ENCODE measurements at regions of chr2 and their contacts with region 1.

Region 1: DNA sequence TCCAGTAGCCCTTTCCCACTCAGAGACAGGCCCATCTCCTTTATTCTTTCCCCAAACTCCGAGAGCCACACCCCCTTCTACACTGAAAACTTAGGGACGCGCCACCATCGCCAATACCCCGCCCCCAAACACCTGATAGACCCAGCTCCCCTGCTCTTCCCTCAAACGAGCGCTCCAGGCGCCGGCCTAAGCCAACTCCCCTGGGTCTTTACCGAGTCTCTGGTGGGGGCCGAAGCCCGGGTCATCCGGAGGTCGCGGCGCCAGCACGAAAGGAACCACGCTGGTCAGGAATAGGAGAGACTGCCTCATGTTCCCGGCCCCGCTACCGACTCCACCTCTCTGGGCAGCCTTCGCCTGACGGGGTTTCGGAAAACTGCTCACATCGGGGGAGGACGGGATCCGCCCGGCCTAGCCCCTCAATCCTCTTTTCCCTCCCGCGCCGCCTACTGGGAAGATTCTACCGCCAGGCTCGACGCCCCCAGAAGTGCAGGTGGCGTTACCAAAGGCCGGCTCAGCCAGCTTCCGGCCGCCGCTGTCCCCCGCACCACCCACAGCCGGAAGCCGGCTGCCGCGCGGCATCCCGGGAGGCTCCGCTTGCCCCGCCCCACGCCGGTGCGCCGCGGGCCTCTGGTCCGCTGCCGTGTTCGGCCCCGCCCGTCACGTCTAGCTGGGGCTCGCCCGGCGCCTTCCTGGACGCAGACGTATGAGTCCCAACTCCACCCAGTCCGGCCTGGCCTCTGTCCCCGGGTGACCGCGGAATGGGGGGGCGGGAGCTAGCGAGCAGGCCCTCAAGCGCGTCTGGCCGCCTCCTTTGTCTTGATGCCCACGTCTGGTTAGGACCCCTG is at the start of gene ADAM17:
- DNase-seq: peak; percentile 96 to 97
- ATAC-seq: peak; percentile 83 to 85
- H3K4me3 ChIP-seq: peak within 1 kb of the TSS; percentile 91 to 98 (median 95)
- H3K27ac ChIP-seq: peak within 1 kb of the TSS; percentile 96 to 99 (median 98)
- H3K4me1 ChIP-seq: peaks cover 48 to 53% of the 10 kb centered on the region in 2 donors
- H3K27me3 ChIP-seq: no peaks in the 10 kb centered on the region
- CTCF ChIP-seq: peak; percentile 49 to 80 (median 68)
- POLR2A ChIP-seq: peak; percentile 86 to 95
- total RNA-seq, gene ADAM17: 13.5 to 27.1 (median 22.0) TPM

Region 2: GRCh38 chr2:9333591-9334171 is 221.8 kb before region 1 on chr2:
- in situ Hi-C with region 1: no loop called
- intact Hi-C with region 1: no loop called
- DNase-seq: peak; percentile 24 to 45
- ATAC-seq: peak; percentile 86 to 91
- H3K4me3 ChIP-seq: no peak overlapping the region
- H3K27ac ChIP-seq: peak overlapping the region in 2 of 4 donors; percentile 11 to 24
- H3K4me1 ChIP-seq: peaks cover 7 to 16% of the 10 kb centered on the region in 2 donors
- H3K27me3 ChIP-seq: no peaks in the 10 kb centered on the region
- CTCF ChIP-seq: peak; percentile 36 to 66 (median 45)
- POLR2A ChIP-seq: no peak

Region 3: GRCh38 chr2:9423100-9423921 is 132.2 kb before region 1 on chr2 and contains the starts of genes CPSF3 and ITGB1BP1:
- in situ Hi-C with region 1: no loop called
- intact Hi-C with region 1: loop called (anchors 2 kb)
- DNase-seq: peak; percentile 94 to 96
- ATAC-seq: peak; percentile 93 to 96
- H3K4me3 ChIP-seq: peak within 1 kb of the TSS; percentile 84 to 99 (median 98)
- H3K27ac ChIP-seq: peak within 1 kb of the TSS; percentile 82 to 96 (median 91)
- H3K4me1 ChIP-seq: peaks cover 27 to 29% of the 10 kb centered on the region in 2 donors
- H3K27me3 ChIP-seq: no peaks in the 10 kb centered on the region
- CTCF ChIP-seq: peak in 3 of 5 experiments; percentile 11 to 35 (median 27)
- POLR2A ChIP-seq: peak; percentile 55 to 60
- total RNA-seq, gene CPSF3: 20.9 to 51.8 (median 24.1) TPM
- total RNA-seq, gene ITGB1BP1: 21.4 to 28.0 (median 26.4) TPM

Region 4: GRCh38 chr2:9474361-9474967 is 81.1 kb before region 1 on chr2 and contains the start of gene IAH1:
- in situ Hi-C with region 1: no loop called
- intact Hi-C with region 1: loop called (anchors 1 kb)
- DNase-seq: peak; percentile 22 to 49
- ATAC-seq: peak; percentile 79 to 81
- H3K4me3 ChIP-seq: peak within 1 kb of the TSS; percentile 73 to 88 (median 79)
- H3K27ac ChIP-seq: peak within 1 kb of the TSS; percentile 80 to 92 (median 91)
- H3K4me1 ChIP-seq: peaks cover 21 to 46% of the 10 kb centered on the region in 2 donors
- H3K27me3 ChIP-seq: no peaks in the 10 kb centered on the region
- CTCF ChIP-seq: no peak
- POLR2A ChIP-seq: peak; percentile 52 to 59
- total RNA-seq, gene IAH1: 15.8 to 45.9 (median 38.6) TPM

Region 5: GRCh38 chr2:9693211-9693520 is 137.6 kb after region 1 on chr2:
- in situ Hi-C with region 1: no loop called
- intact Hi-C with region 1: loop called (anchors 2 kb)
- DNase-seq: peak; percentile 87 to 96
- ATAC-seq: peak; percentile 97 to 98
- H3K4me3 ChIP-seq: peak overlapping the region; percentile 26 to 46 (median 38)
- H3K27ac ChIP-seq: peak overlapping the region; percentile 90 to 97 (median 96)
- H3K4me1 ChIP-seq: peaks cover 19 to 20% of the 10 kb centered on the region in 2 donors
- H3K27me3 ChIP-seq: no peaks in the 10 kb centered on the region
- CTCF ChIP-seq: no peak
- POLR2A ChIP-seq: no peak

Region 6: GRCh38 chr2:9757501-9758264 is 202.2 kb after region 1 on chr2:
- in situ Hi-C with region 1: no loop called
- intact Hi-C with region 1: loop called (anchors 1 kb)
- DNase-seq: peak; percentile 75 to 90
- ATAC-seq: peak; percentile 76 to 77
- H3K4me3 ChIP-seq: peak overlapping the region; percentile 42 to 57 (median 48)
- H3K27ac ChIP-seq: peak overlapping the region; percentile 90 to 96 (median 94)
- H3K4me1 ChIP-seq: peaks cover 54 to 55% of the 10 kb centered on the region in 2 donors
- H3K27me3 ChIP-seq: no peaks in the 10 kb centered on the region
- CTCF ChIP-seq: no peak
- POLR2A ChIP-seq: peak; percentile 55 to 58

Region 7: GRCh38 chr2:10844097-10844496 is 1288.6 kb after region 1 on chr2:
- in situ Hi-C with region 1: no loop called
- intact Hi-C with region 1: loop called (anchors 10 kb)
- DNase-seq: peak; percentile 92 to 95
- ATAC-seq: peak; percentile 75 to 78
- H3K4me3 ChIP-seq: peak overlapping the region; percentile 2 to 46 (median 40)
- H3K27ac ChIP-seq: peak overlapping the region; percentile 86 to 94 (median 92)
- H3K4me1 ChIP-seq: peaks cover 46 to 54% of the 10 kb centered on the region in 2 donors
- H3K27me3 ChIP-seq: no peaks in the 10 kb centered on the region
- CTCF ChIP-seq: no peak
- POLR2A ChIP-seq: peak; percentile 50 to 59

Measured in gastrocnemius medialis (tissue), 4 donors.